ENCODE measurements at regions of chr10 and their contacts with region 1.

Region 1: GRCh38 chr10:79938728-79939406 is 10.0 kb downstream of the SFTPD start:
- DNase-seq: peak; percentile 37
- H3K4me3 ChIP-seq: no peak overlapping the region
- H3K27ac ChIP-seq: no peak overlapping the region
- H3K4me1 ChIP-seq: no peaks in the 10 kb centered on the region
- H3K27me3 ChIP-seq: no peaks in the 10 kb centered on the region
- CTCF ChIP-seq: no peak
- EP300 ChIP-seq: no peak
- POLR2A ChIP-seq: no peak

Region 2: GRCh38 chr10:81534991-81535390 is 1596.1 kb after region 1 on chr10:
- in situ Hi-C with region 1: no loop called
- intact Hi-C with region 1: loop called (anchors 10 kb)
- DNase-seq: no peak
- H3K4me3 ChIP-seq: no peak overlapping the region
- H3K27ac ChIP-seq: no peak overlapping the region
- H3K4me1 ChIP-seq: no peaks in the 10 kb centered on the region
- H3K27me3 ChIP-seq: no peaks in the 10 kb centered on the region
- CTCF ChIP-seq: no peak
- EP300 ChIP-seq: no peak
- POLR2A ChIP-seq: no peak